ENCODE measurements at regions of chr3 and their contacts with region 1.

Region 1: DNA sequence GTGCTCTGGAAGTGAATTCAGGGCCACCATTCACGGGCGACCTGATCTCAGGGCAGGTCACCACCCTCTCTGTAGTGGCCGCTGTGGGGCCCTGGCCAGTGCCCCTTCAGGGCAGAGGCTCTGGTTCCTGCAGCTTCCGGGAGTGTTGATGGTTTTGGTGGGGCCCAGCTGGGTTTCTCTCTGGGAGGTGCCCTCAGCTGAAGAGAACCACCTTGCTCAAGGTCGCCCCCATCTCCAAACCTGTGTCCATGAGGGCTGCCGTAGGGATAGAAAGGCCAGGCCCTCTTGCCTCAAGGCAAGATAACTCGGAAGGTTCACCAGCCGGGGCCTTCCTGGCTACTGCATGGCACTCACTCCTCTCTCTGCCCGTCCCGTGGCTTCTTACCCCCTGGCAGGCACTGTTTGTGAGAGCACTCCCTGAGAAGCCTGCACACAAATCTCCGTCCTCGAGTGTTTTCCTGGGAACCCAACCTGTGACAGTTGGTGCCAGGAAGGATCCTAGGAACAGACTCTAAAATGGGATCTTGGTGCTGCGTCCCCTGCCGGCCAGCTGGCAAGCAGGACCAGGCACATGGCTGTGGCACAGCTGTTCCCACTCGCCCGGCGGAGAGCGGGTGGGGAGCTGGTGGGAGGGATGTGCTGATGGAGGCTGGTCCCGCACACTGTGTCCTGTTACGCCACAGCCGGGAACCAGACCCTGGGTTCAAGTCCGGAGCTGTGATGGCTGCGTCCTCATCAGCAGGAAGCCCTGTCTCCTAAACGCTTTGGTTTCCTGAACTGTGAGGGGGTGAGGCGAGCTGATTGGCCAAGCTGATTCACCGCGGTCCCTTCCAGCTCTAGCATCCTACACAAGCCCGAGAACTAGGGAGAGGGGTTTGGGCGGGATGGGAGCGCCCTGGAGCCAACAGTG is 23.2 kb upstream of the PIGZ start:
- DNase-seq: no peak
- H3K4me3 ChIP-seq: no peak overlapping the region
- H3K27me3 ChIP-seq: peaks cover 5% of the 10 kb centered on the region
- CTCF ChIP-seq: 0 out of 2 replicates have a peak, but pooled peaks have one; percentile 9

Region 2: GRCh38 chr3:197002701-197003454 is 11.0 kb after region 1 on chr3:
- CTCF ChIA-PET with region 1: interaction called, 15 read pairs
- POLR2A ChIA-PET with region 1: no interaction called
- DNase-seq: no peak
- H3K4me3 ChIP-seq: peak overlapping the region; percentile 59
- H3K27me3 ChIP-seq: no peaks in the 10 kb centered on the region
- CTCF ChIP-seq: peak; percentile 41

Measured in BJ (cell line).